ENCODE measurements at regions of chr7 and their contacts with region 1.

Region 1: GRCh38 chr7:20172736-20173334 is 44.3 kb downstream of the MACC1 start:
- DNase-seq: peak; percentile 70

Region 2: DNA sequence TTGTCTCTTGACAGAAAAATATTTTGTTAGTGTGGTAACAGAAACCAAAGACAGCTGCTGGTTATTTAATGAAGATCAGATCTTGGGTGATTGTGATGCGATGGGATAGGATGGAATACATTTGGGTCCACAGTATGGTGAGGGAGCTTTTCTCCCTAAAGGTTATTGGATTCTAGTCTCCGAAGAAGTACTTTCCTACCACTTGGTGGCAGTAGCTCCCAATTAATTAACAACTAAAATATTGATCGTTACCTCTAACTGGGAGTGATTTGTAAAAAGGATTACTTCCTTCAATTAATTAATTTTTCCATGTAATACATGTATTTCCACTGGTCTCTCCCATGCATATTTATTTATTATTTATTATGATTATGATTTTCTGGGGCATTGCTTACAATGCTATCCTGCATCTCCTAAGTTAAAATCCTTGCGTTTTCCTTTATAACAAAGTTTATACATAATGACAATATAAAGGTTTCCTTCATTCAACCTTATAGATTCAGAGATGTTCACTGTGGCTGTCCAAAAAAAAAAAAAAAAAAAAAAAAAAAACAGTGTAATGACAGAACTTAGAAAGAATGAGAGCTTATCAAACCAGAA is 425.0 kb before region 1 on chr7:
- CTCF ChIA-PET with region 1: interaction called, 11 read pairs
- POLR2A ChIA-PET with region 1: no interaction called
- DNase-seq: peak; percentile 39

Region 3: GRCh38 chr7:20152511-20152910 is 20.3 kb before region 1 on chr7:
- CTCF ChIA-PET with region 1: no interaction called
- POLR2A ChIA-PET with region 1: no interaction called
- DNase-seq: no peak

Measured in HEK293T (cell line).